ENCODE measurements at regions of chr12 and their contacts with region 1.

Region 1: DNA sequence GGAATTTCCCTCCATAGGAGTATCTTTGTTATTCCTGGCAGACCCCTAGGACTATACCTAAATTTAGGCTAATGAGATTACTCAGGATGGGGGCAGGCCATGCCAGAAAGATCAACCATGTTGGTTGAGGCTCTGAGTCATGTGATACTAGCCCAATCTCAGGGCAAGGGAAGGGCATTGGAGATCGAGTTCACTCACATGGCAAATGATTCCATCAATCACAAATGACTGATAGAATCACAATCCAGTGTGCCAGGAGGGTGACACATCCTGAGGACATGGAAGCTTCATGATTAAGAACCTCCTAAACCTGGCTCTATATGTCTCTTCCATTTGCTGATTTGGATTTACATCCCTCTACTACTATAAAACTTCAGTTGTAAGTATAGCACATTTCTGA is 182.3 kb downstream of the NTF3 start:
- DNase-seq: no peak
- H3K4me3 ChIP-seq: no peak overlapping the region
- H3K27ac ChIP-seq: no peak overlapping the region
- H3K4me1 ChIP-seq: peaks cover 0 to 5% (median under 1%) of the 10 kb centered on the region in 4 donors
- H3K27me3 ChIP-seq: no peaks in the 10 kb centered on the region
- CTCF ChIP-seq: no peak
- EP300 ChIP-seq: no peak
- POLR2A ChIP-seq: no peak

Region 2: DNA sequence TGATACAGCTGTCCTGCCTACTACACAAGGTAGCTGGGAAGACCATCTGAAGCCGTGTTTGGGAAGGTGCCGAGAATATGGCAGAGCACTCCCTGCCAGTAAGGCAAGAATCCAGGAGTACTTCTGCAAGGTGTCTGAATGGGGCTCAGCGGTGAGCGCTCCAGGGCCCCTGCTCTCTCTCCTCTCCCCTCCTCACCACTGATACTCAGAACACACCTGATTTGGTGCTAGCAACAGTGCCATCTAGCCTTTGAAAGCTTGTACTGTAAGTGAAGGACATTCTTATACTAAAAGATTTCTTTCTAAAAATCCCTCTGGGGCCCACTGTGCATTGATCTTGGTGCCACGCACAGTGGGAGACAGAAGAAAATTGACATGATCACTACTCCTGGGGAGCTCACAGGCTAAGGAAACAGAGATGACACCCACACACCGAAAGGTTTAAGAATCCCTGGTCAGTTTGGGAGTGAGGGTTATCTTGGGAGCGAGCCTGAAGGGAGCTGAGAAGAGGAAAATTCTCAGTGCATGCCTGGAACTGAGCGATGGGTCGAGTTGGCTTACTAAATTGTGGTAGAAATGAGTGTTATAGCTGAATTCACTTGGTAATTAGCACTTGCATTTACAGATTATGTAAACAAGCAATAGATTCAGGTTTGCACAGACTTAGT is 34.6 kb after region 1 on chr12:
- in situ Hi-C with region 1: no loop called
- intact Hi-C with region 1: loop called (anchors 1 kb)
- DNase-seq: no peak
- H3K4me3 ChIP-seq: no peak overlapping the region
- H3K27ac ChIP-seq: no peak overlapping the region
- H3K4me1 ChIP-seq: no peaks in the 10 kb centered on the region
- H3K27me3 ChIP-seq: no peaks in the 10 kb centered on the region
- CTCF ChIP-seq: peak; percentile 39 to 46 (median 45)
- EP300 ChIP-seq: no peak
- POLR2A ChIP-seq: no peak

Measured in transverse colon (tissue), 4 donors.